H1 (cell line): ENCODE measurements at regions of chr2 and their contacts with region 1.

Region 1: GRCh38 chr2:119049968-119050704 is 108.1 kb downstream of the MARCO start:
- DNase-seq: peak in 1 of 2 experiments; percentile 79
- H3K4me3 ChIP-seq: no peak overlapping the region
- H3K27ac ChIP-seq: no peak overlapping the region
- H3K4me1 ChIP-seq: peaks cover 0 to 4% (median 2%) of the 10 kb centered on the region in 4 experiments; a peak in 3 of 7 replicates
- H3K27me3 ChIP-seq: no peaks in the 10 kb centered on the region
- CTCF ChIP-seq: peak; percentile 39 to 71 (median 68)
- EP300 ChIP-seq: no peak
- POLR2A ChIP-seq: no peak
- RAD21 ChIP-seq: peak; percentile 57 to 62

Region 2: GRCh38 chr2:119028327-119029174 is 21.6 kb before region 1 on chr2:
- CTCF ChIA-PET with region 1: interaction called, 46 read pairs
- POLR2A ChIA-PET with region 1: interaction called, 3 read pairs
- DNase-seq: peak in 1 of 2 experiments; percentile 84
- H3K4me3 ChIP-seq: no peak overlapping the region
- H3K27ac ChIP-seq: no peak overlapping the region
- H3K4me1 ChIP-seq: no peaks in the 10 kb centered on the region; a peak in 1 of 7 replicates
- H3K27me3 ChIP-seq: no peaks in the 10 kb centered on the region
- CTCF ChIP-seq: peak; percentile 59 to 78 (median 62)
- EP300 ChIP-seq: no peak
- POLR2A ChIP-seq: no peak
- RAD21 ChIP-seq: peak; percentile 66 to 81

Region 3: GRCh38 chr2:119066272-119066804 is 16.2 kb after region 1 on chr2:
- CTCF ChIA-PET with region 1: interaction called, 30 read pairs
- POLR2A ChIA-PET with region 1: interaction called, 3 read pairs
- DNase-seq: no peak
- H3K4me3 ChIP-seq: no peak overlapping the region
- H3K27ac ChIP-seq: no peak overlapping the region
- H3K4me1 ChIP-seq: peaks cover 0 to 11% (median 7%) of the 10 kb centered on the region in 4 experiments; a peak in 6 of 7 replicates
- H3K27me3 ChIP-seq: no peaks in the 10 kb centered on the region
- CTCF ChIP-seq: no peak
- EP300 ChIP-seq: no peak
- POLR2A ChIP-seq: no peak
- RAD21 ChIP-seq: no peak

Region 4: DNA sequence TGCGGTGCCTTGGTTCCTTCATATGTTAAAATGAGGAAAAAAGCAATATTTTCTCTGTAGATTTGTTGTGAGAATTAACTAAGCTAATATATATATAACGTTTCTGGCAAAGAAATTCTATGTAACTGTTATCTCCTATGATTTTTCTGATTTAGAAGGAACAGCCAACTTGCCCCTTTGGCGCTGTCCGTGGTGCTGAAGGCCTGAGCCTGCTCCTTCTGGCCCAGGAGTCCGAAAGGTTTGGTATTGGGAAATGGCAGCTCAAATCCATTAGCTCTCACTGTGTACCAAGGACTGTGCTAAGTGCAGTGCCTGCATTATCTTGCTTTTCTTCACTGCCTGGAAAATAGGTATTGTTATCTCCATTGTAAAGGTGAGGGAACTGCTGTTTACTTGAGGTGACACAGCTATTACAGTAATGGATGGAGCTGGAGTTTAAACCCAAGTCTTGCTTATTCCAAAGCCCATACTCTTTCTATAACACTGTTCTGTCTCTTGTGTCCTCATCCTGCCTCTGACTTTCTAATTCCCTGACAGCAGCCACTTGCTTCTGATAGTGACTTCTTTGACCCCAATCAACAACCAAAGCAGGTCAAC is 56.3 kb after region 1 on chr2:
- CTCF ChIA-PET with region 1: interaction called, 11 read pairs
- POLR2A ChIA-PET with region 1: no interaction called
- DNase-seq: peak in 1 of 2 experiments; percentile 88
- H3K4me3 ChIP-seq: no peak overlapping the region
- H3K27ac ChIP-seq: no peak overlapping the region
- H3K4me1 ChIP-seq: peaks cover 3 to 14% (median 8%) of the 10 kb centered on the region in 4 experiments; a peak in 6 of 7 replicates
- H3K27me3 ChIP-seq: no peaks in the 10 kb centered on the region; a peak in 1 of 7 replicates
- CTCF ChIP-seq: no peak
- EP300 ChIP-seq: no peak
- POLR2A ChIP-seq: no peak
- RAD21 ChIP-seq: no peak

Region 5: GRCh38 chr2:119126650-119127049 is 76.5 kb after region 1 on chr2:
- CTCF ChIA-PET with region 1: interaction called, 18 read pairs
- POLR2A ChIA-PET with region 1: no interaction called
- DNase-seq: peak; percentile 84 to 90
- H3K4me3 ChIP-seq: peak overlapping the region in 1 of 4 experiments; percentile 16; a peak in 1 of 8 replicates
- H3K27ac ChIP-seq: no peak overlapping the region
- H3K4me1 ChIP-seq: peaks cover 0 to 16% (median 8%) of the 10 kb centered on the region in 4 experiments; a peak in 4 of 7 replicates
- H3K27me3 ChIP-seq: peaks cover 0 to 9% (median 0%) of the 10 kb centered on the region in 4 experiments; a peak in 2 of 7 replicates
- CTCF ChIP-seq: peak; percentile 69 to 83 (median 77)
- EP300 ChIP-seq: no peak
- POLR2A ChIP-seq: no peak
- RAD21 ChIP-seq: peak; percentile 49 to 66